ENCODE measurements at regions of chr1 and their contacts with region 1.

Region 1: GRCh38 chr1:160031365-160032164 is at the start of gene PIGM:
- DNase-seq: peak; percentile 99
- ATAC-seq: peak; percentile 98
- H3K4me3 Mint-ChIP-seq: peak within 1 kb of the TSS; percentile 91
- H3K27ac Mint-ChIP-seq: peak within 1 kb of the TSS; percentile 97
- H3K4me1 Mint-ChIP-seq: peaks cover 17% of the 10 kb centered on the region
- H3K27me3 Mint-ChIP-seq: peaks cover 12% of the 10 kb centered on the region; the same call in 1 of the 2 replicates
- CTCF ChIP-seq: no peak
- total RNA-seq, gene PIGM: 4.4 to 5.2 TPM (median 4.4 TPM) in 3 replicates

Region 2: GRCh38 chr1:159960721-159961381 is 70.7 kb before region 1 on chr1:
- CTCF ChIA-PET with region 1: no interaction called
- POLR2A ChIA-PET with region 1: no interaction called
- DNase-seq: no peak
- ATAC-seq: no peak
- H3K4me3 Mint-ChIP-seq: no peak overlapping the region
- H3K27ac Mint-ChIP-seq: no peak overlapping the region
- H3K4me1 Mint-ChIP-seq: peaks cover 11% of the 10 kb centered on the region
- H3K27me3 Mint-ChIP-seq: peaks cover 2% of the 10 kb centered on the region
- CTCF ChIP-seq: no peak

Region 3: GRCh38 chr1:160046494-160047110 is 15.0 kb after region 1 on chr1:
- CTCF ChIA-PET with region 1: interaction called, 35 read pairs
- POLR2A ChIA-PET with region 1: interaction called, 4 read pairs
- DNase-seq: peak; percentile 61
- ATAC-seq: peak; percentile 88
- H3K4me3 Mint-ChIP-seq: peak overlapping the region; percentile 26; the same call in 1 of the 2 replicates
- H3K27ac Mint-ChIP-seq: no peak overlapping the region
- H3K4me1 Mint-ChIP-seq: peaks cover 30% of the 10 kb centered on the region
- H3K27me3 Mint-ChIP-seq: peaks cover 7% of the 10 kb centered on the region
- CTCF ChIP-seq: peak; percentile 57; the same call in 1 of the 2 replicates

Region 4: DNA sequence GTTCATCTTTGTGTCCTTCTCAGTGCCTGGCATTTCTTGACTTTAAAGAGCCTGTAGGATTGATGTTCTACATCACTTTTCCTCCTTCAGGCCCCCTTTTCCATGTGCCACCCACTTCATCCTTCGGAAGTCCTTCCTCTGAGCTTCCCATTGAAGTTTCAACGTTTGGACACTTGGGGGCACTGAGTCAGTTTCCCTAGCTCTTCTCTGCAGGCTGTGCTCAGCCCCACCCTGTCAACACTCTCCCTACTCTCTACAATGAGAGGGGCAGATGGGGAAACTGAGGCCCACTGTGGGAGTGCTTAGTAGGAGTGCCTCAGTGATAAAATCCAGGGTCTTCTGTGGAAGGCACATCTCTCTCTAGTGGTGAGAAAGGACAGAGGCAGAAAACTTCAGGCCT is 26.5 kb after region 1 on chr1:
- CTCF ChIA-PET with region 1: interaction called, 978 read pairs
- POLR2A ChIA-PET with region 1: no interaction called
- DNase-seq: no peak
- ATAC-seq: peak; percentile 53
- H3K4me3 Mint-ChIP-seq: no peak overlapping the region
- H3K27ac Mint-ChIP-seq: no peak overlapping the region
- H3K4me1 Mint-ChIP-seq: peaks cover 18% of the 10 kb centered on the region
- H3K27me3 Mint-ChIP-seq: peaks cover 7% of the 10 kb centered on the region
- CTCF ChIP-seq: no peak

Region 5: DNA sequence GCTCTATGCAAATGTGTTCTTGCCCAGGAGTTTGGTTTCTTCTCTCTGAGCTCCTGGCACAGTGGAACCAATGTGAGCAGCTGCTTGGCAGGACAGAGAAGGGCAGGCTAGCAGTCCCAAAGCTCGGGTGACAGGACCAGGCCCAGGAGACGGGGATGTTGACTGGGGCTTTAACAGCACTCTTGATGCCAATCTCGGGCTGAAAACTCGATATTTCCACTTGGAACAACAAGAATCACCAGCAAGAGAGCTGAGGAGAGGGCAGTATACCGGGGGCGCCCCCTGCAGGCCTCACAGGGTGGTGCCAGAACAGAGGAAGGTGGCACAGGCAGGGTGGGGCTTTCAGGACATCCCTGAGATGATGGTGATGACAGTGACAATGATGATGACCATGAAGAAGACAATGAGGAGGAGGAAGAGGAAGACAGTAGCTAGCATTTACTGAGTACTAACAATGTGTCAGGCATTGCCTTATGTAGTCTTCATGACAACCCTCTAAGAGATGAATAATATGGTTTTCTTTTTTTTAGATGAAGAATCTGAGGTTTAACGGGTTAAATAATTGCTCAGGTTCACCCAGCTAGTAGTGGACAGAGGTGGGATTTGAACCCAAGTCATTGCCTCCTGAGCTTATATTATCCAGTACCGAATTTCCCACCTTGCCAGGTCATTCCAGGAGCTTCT is 47.1 kb after region 1 on chr1:
- CTCF ChIA-PET with region 1: interaction called, 978 read pairs
- POLR2A ChIA-PET with region 1: interaction called, 3 read pairs
- DNase-seq: peak; percentile 78
- ATAC-seq: peak; percentile 89
- H3K4me3 Mint-ChIP-seq: no peak overlapping the region
- H3K27ac Mint-ChIP-seq: no peak overlapping the region
- H3K4me1 Mint-ChIP-seq: peaks cover 4% of the 10 kb centered on the region
- H3K27me3 Mint-ChIP-seq: peaks cover 82% of the 10 kb centered on the region
- CTCF ChIP-seq: peak; percentile 95

Measured in WTC11 (cell line).